ENCODE measurements at regions of chr2 and their contacts with region 1.

Region 1: DNA sequence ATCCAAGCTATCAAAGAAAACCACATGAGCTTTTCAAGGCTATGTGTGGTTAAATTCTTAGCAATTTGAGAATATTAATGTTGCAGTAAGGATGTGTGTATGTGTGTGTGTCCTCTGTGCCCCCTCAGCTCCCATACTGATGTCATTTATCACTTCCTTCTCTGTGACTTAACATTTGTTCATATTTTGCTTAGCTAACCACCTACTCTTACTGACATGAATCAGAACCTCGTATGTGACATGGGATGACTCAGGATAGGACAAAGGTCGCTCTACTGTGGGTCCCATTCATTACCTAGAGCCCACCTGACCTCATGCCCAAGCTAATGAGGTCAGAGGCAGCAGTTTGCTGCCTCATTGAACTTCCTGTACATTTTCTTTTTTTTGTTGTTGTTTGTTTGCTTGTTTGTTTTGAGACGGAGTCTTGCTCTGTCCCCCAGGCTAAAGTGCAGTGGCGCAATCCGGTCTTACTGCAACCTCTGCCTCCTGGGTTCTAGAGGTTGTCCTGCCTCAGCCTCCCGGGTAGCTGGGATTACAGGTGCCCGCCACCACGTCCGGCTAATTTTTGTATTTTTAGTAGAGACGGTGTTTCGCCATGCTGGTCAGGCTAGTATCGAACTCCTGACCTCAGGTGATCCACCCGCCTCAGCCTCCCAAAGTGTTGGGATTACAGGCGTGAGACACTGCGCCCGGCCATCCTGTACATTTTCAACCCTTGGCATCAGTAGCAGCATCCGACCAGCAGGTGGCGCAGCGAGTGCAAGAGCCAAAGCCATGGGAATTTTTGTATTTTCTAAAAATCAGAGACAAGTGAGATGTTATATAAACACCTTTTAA is 36.4 kb downstream of the MOGAT1 start:
- DNase-seq: peak; percentile 89
- H3K4me3 ChIP-seq: no peak overlapping the region
- H3K27ac ChIP-seq: peak overlapping the region in 4 of 5 donors; percentile 23 to 40 (median 34)
- H3K4me1 ChIP-seq: peaks cover 22 to 44% (median 32%) of the 10 kb centered on the region in 4 donors
- H3K27me3 ChIP-seq: no peaks in the 10 kb centered on the region
- CTCF ChIP-seq: peak in 6 of 7 experiments; percentile 72 to 99 (median 95)
- EP300 ChIP-seq: no peak
- POLR2A ChIP-seq: no peak

Region 2: GRCh38 chr2:222903234-222904220 is 195.6 kb after region 1 on chr2:
- intact Hi-C with region 1: loop called (anchors 5 kb)
- DNase-seq: peak; percentile 45 to 73
- H3K4me3 ChIP-seq: no peak overlapping the region
- H3K27ac ChIP-seq: peak overlapping the region; percentile 18 to 77 (median 55)
- H3K4me1 ChIP-seq: peaks cover 28 to 92% (median 75%) of the 10 kb centered on the region in 4 donors
- H3K27me3 ChIP-seq: no peaks in the 10 kb centered on the region
- CTCF ChIP-seq: peak in 5 of 7 experiments; percentile 41 to 57 (median 53)
- EP300 ChIP-seq: no peak
- POLR2A ChIP-seq: no peak